ENCODE measurements at regions of chr1 and their contacts with region 1.

Region 1: GRCh38 chr1:110674337-110675059 is at the start of gene KCNA3:
- DNase-seq: peak; percentile 58
- H3K4me3 Mint-ChIP-seq: peak within 1 kb of the TSS; percentile 96
- H3K27ac Mint-ChIP-seq: peak within 1 kb of the TSS; percentile 92
- H3K4me1 Mint-ChIP-seq: peaks cover 24% of the 10 kb centered on the region
- H3K27me3 Mint-ChIP-seq: no peaks in the 10 kb centered on the region
- total RNA-seq, gene KCNA3: 15.3 to 15.4 TPM

Region 2: DNA sequence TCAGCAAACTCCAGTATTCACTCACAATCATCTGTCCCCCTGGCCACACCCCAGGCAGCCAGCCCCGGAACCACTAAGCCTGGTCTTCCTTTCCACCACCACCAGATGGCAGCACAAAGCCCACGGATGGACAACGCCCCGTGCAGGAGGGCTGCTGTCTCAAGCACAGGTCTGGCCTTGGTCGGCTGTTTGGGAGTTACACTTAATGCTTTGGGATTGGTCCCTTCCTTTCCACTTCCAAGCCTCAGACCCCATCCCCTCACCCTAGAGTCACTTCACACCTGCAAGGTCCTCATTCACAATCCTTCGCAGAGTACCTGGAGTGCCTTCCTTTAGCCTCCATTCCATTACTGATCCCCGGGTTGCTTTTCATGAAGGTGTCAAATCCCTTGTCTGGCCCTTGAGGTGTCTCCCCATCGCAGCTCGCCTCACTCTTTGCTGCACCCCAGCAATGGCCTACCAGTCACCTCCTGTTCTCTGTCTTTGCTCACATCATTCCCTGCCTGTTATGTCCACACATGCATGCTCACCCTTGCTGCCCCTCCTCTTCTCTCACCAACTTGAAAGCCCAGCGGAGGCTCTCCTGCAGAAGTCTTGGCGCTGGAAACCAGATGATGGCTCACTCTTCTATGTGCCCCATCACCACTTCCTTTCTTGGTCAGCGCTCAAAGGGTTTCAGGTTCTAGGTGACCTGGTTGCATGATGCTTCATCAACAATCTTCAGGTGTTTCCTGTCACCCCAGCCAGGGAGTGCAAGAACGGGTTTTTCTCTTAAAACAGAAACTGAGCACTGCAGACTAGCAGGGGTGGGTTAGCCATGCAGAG is 43.4 kb before region 1 on chr1:
- CTCF ChIA-PET with region 1: interaction called, 22 read pairs
- intact Hi-C with region 1: loop called (anchors 1 kb)
- DNase-seq: peak; percentile 92
- H3K4me3 Mint-ChIP-seq: no peak overlapping the region
- H3K27ac Mint-ChIP-seq: no peak overlapping the region
- H3K4me1 Mint-ChIP-seq: peaks cover 54% of the 10 kb centered on the region
- H3K27me3 Mint-ChIP-seq: no peaks in the 10 kb centered on the region

Region 3: GRCh38 chr1:110657351-110657750 is 17.1 kb before region 1 on chr1:
- CTCF ChIA-PET with region 1: no interaction called
- intact Hi-C with region 1: loop called (anchors 1 kb)
- DNase-seq: no peak
- H3K4me3 Mint-ChIP-seq: no peak overlapping the region
- H3K27ac Mint-ChIP-seq: peak overlapping the region; percentile 71
- H3K4me1 Mint-ChIP-seq: peaks cover 41% of the 10 kb centered on the region
- H3K27me3 Mint-ChIP-seq: no peaks in the 10 kb centered on the region

Region 4: DNA sequence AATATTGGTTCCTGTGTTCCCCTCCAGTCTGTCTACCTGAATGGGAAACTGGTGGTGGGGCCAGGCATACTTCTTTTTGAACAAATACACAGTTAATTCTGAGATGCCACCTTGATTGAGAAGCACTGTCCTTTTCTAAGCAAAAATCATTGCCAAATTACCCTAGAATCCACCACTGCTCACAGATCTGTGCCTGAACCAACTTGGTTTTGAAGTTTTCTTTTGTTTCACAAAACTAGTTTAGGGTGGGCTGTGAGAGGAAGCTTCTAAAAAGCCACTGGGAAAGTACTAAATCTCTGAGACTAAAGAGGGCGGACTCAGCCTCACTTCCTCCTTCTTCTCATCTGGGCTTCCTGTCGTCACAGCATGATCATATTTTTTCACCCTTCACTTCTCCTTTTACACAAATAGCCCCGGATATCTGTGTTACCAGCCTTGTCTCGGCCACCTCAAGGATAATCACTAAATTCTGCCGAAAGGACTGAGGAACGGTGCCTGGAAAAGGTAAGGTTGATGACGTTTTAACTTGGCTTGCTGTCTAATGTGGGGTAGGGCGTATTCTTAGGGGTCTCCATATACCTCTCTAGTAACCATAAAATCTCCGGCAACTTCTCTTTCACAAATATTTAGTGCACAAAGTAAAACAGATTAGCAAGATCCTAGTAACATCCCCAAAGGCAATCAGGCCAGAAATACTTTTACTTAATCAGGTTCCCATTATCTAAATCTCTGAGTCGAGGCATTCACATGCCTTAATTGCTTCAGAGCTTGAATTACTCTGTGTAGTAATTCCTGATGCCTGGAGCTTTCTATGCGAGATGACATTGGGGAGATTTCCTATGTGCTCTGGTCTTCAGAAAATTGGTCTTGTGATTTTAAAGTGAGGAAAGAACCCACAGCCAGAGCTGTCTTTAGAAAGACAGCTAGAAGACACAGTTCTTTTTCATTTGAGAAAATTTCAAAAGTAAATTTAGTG is 198.5 kb after region 1 on chr1 and contains the start of gene CD53:
- CTCF ChIA-PET with region 1: no interaction called
- intact Hi-C with region 1: loop called (anchors 1 kb)
- DNase-seq: peak; percentile 72
- H3K4me3 Mint-ChIP-seq: peak within 1 kb of the TSS; percentile 91
- H3K27ac Mint-ChIP-seq: peak within 1 kb of the TSS; percentile 99
- H3K4me1 Mint-ChIP-seq: peaks cover 39% of the 10 kb centered on the region
- H3K27me3 Mint-ChIP-seq: no peaks in the 10 kb centered on the region
- total RNA-seq, gene CD53: 239 to 255 TPM

Region 5: GRCh38 chr1:111139956-111140679 is 465.6 kb after region 1 on chr1 and contains the starts of genes CEPT1 and DRAM2:
- CTCF ChIA-PET with region 1: no interaction called
- intact Hi-C with region 1: loop called (anchors 1 kb)
- DNase-seq: peak; percentile 98
- H3K4me3 Mint-ChIP-seq: peak within 1 kb of the TSS; percentile 94
- H3K27ac Mint-ChIP-seq: peak within 1 kb of the TSS; percentile 91
- H3K4me1 Mint-ChIP-seq: peaks cover 49% of the 10 kb centered on the region
- H3K27me3 Mint-ChIP-seq: no peaks in the 10 kb centered on the region
- total RNA-seq, gene CEPT1: 29.0 to 30.3 TPM
- total RNA-seq, gene DRAM2: 27.7 to 31.1 TPM

Region 6: GRCh38 chr1:111214074-111214801 is 539.7 kb after region 1 on chr1:
- CTCF ChIA-PET with region 1: no interaction called
- intact Hi-C with region 1: loop called (anchors 2 kb)
- DNase-seq: peak; percentile 58
- H3K4me3 Mint-ChIP-seq: peak overlapping the region; percentile 75
- H3K27ac Mint-ChIP-seq: peak overlapping the region; percentile 99
- H3K4me1 Mint-ChIP-seq: peaks cover 82% of the 10 kb centered on the region
- H3K27me3 Mint-ChIP-seq: no peaks in the 10 kb centered on the region

Region 7: GRCh38 chr1:111619635-111620440 is 945.3 kb after region 1 on chr1 and contains the start of gene RAP1A:
- CTCF ChIA-PET with region 1: no interaction called
- intact Hi-C with region 1: loop called (anchors 10 kb)
- DNase-seq: peak; percentile 97
- H3K4me3 Mint-ChIP-seq: peak within 1 kb of the TSS; percentile 93
- H3K27ac Mint-ChIP-seq: peak within 1 kb of the TSS; percentile 96
- H3K4me1 Mint-ChIP-seq: peaks cover 68% of the 10 kb centered on the region
- H3K27me3 Mint-ChIP-seq: no peaks in the 10 kb centered on the region
- total RNA-seq, gene RAP1A: 152 to 155 TPM